ENCODE measurements at regions of chr5 and their contacts with region 1.

Region 1: GRCh38 chr5:78886341-78887230 is 98.5 kb downstream of the ARSB start:
- DNase-seq: no peak
- H3K4me3 Mint-ChIP-seq: no peak overlapping the region
- H3K27ac Mint-ChIP-seq: no peak overlapping the region
- H3K4me1 Mint-ChIP-seq: peaks cover 15% of the 10 kb centered on the region
- H3K27me3 Mint-ChIP-seq: peaks cover 4% of the 10 kb centered on the region

Region 2: GRCh38 chr5:78648359-78649210 is 238.0 kb before region 1 on chr5 and contains the start of gene LHFPL2:
- intact Hi-C with region 1: loop called (anchors 5 kb)
- DNase-seq: peak; percentile 4
- H3K4me3 Mint-ChIP-seq: peak within 1 kb of the TSS; percentile 81
- H3K27ac Mint-ChIP-seq: no peak within 1 kb of the TSS
- H3K4me1 Mint-ChIP-seq: peaks cover 16% of the 10 kb centered on the region
- H3K27me3 Mint-ChIP-seq: peaks cover 43% of the 10 kb centered on the region
- total RNA-seq, gene LHFPL2: 0.08 and 0.47 TPM in 2 replicates

Region 3: GRCh38 chr5:78757269-78758053 is 129.1 kb before region 1 on chr5:
- intact Hi-C with region 1: loop called (anchors 2 kb)
- DNase-seq: peak; percentile 9
- H3K4me3 Mint-ChIP-seq: peak overlapping the region; percentile 55
- H3K27ac Mint-ChIP-seq: peak overlapping the region; percentile 76
- H3K4me1 Mint-ChIP-seq: peaks cover 31% of the 10 kb centered on the region
- H3K27me3 Mint-ChIP-seq: no peaks in the 10 kb centered on the region

Region 4: GRCh38 chr5:78779771-78780616 is 106.6 kb before region 1 on chr5:
- intact Hi-C with region 1: no loop called
- DNase-seq: no peak
- H3K4me3 Mint-ChIP-seq: no peak overlapping the region
- H3K27ac Mint-ChIP-seq: no peak overlapping the region
- H3K4me1 Mint-ChIP-seq: peaks cover 5% of the 10 kb centered on the region
- H3K27me3 Mint-ChIP-seq: no peaks in the 10 kb centered on the region

Measured in activated T-helper 1 cell treated with anti-CD3 and anti-CD28 coated beads, Interleukin-12 subunit alpha, Interleukin-12 subunit beta, Interleukin-2, Interleukin-4 antibody, amounts not matched to agents 30 ng/mL and 10 ng/mL and 1 ng/mL, durations not matched to agents 14 hours and 24 hours and 36 hours (primary cell).